ENCODE measurements at regions of chrX and their contacts with region 1.

Region 1: DNA sequence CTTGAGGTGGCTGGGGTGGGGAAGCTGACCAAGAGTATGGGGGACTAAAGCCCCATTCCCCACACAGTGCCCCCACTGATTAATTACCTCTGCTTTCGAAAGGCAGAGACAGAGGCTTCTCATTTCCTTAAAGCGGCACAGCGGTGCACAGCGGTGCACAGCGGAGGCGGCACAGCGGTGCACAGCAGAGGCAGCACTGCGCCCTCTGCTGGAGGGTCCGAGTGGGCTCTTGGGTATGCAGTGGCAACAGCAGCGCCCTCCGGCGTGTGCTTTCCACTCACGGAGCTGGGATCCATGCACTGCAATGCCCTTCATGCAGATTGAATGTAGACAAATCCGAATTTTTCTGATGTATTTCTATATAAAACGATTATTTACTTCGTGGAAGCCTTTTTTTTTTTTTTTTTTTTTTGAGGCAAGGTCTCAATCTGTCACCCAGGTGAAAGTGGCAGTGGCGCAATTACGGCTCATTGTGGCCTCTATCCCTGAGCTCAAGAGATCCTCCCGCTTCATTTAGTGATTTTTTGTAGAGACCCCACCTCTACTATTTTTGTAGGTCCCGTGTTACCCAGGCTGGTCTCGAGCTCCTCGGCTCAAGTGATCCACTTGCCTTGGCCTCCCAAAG is 19.7 kb upstream of the PRPS2 start:
- DNase-seq: peak; percentile 73
- H3K4me3 Mint-ChIP-seq: no peak overlapping the region
- H3K27ac Mint-ChIP-seq: no peak overlapping the region
- H3K4me1 Mint-ChIP-seq: peaks cover 6% of the 10 kb centered on the region
- H3K27me3 Mint-ChIP-seq: peaks cover 22% of the 10 kb centered on the region

Region 2: GRCh38 chrX:12751887-12752286 is 19.7 kb before region 1 on chrX:
- CTCF ChIA-PET with region 1: interaction called, 17 read pairs
- POLR2A ChIA-PET with region 1: no interaction called
- DNase-seq: no peak
- H3K4me3 Mint-ChIP-seq: no peak overlapping the region
- H3K27ac Mint-ChIP-seq: no peak overlapping the region
- H3K4me1 Mint-ChIP-seq: no peaks in the 10 kb centered on the region
- H3K27me3 Mint-ChIP-seq: peaks cover under 1% of the 10 kb centered on the region

Region 3: DNA sequence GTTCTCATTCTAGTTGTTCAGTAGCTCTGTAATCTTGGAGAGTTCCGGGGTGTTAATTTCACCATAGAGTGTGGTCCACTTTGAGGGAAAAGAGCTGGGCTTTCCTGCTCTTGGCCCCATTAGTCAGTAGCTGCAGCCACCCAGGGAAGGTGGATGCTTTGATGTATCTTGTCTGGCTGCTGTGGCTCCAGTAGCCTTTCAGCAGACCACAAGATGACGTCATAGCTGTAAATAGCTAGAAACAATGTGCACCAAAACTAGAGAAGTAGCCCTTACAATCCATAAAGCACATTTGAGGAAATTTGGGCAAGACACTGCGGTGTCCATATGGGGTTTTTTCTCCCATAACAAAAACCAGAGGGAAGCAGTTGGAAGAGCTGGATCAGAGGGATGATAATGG is 13.3 kb before region 1 on chrX:
- CTCF ChIA-PET with region 1: interaction called, 11 read pairs
- POLR2A ChIA-PET with region 1: no interaction called
- DNase-seq: no peak
- H3K4me3 Mint-ChIP-seq: no peak overlapping the region
- H3K27ac Mint-ChIP-seq: no peak overlapping the region
- H3K4me1 Mint-ChIP-seq: no peaks in the 10 kb centered on the region
- H3K27me3 Mint-ChIP-seq: peaks cover 10% of the 10 kb centered on the region

Region 4: GRCh38 chrX:12791257-12792228 is 20.0 kb after region 1 on chrX and contains the start of gene PRPS2:
- CTCF ChIA-PET with region 1: interaction called, 62 read pairs
- POLR2A ChIA-PET with region 1: interaction called, 14 read pairs
- DNase-seq: peak; percentile 72
- H3K4me3 Mint-ChIP-seq: peak within 1 kb of the TSS; percentile 82
- H3K27ac Mint-ChIP-seq: peak within 1 kb of the TSS; percentile 74
- H3K4me1 Mint-ChIP-seq: peaks cover 31% of the 10 kb centered on the region
- H3K27me3 Mint-ChIP-seq: peaks cover 8% of the 10 kb centered on the region
- total RNA-seq, gene PRPS2: 64.6 to 66.9 TPM

Region 5: DNA sequence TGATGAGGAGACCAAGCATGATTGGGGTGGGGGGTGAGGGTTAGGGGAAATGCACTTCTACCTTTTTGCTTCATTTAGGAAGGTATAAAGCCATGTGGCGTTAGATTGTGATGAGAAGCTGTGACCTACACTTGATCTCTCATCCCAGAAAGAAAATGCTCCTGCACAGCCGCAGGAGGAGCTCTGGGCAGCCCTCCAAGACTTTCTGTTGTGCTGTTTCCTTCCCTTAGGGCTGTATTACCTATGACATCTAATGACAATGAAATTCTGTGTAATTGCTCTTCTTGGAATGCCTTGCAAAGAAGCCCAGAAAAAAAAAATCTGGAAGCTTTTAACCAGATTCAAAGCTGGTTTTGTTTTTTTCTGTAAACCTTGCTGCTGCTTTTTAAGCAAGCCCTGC is 33.1 kb after region 1 on chrX:
- CTCF ChIA-PET with region 1: interaction called, 10 read pairs
- POLR2A ChIA-PET with region 1: no interaction called
- DNase-seq: no peak
- H3K4me3 Mint-ChIP-seq: no peak overlapping the region
- H3K27ac Mint-ChIP-seq: no peak overlapping the region
- H3K4me1 Mint-ChIP-seq: peaks cover 11% of the 10 kb centered on the region
- H3K27me3 Mint-ChIP-seq: no peaks in the 10 kb centered on the region

Region 6: GRCh38 chrX:12868747-12869146 is 97.2 kb after region 1 on chrX:
- CTCF ChIA-PET with region 1: no interaction called
- POLR2A ChIA-PET with region 1: no interaction called
- DNase-seq: no peak
- H3K4me3 Mint-ChIP-seq: no peak overlapping the region
- H3K27ac Mint-ChIP-seq: no peak overlapping the region
- H3K4me1 Mint-ChIP-seq: peaks cover 2% of the 10 kb centered on the region
- H3K27me3 Mint-ChIP-seq: peaks cover 4% of the 10 kb centered on the region

Measured in activated CD4-positive, alpha-beta memory T cell treated with anti-CD3 and anti-CD28 coated beads, Interleukin-2, amount 10 ng/mL, durations not matched to agents 7 days and 5 days (primary cell).